Activated naive CD4-positive, alpha-beta T cell treated with anti-CD3 and anti-CD28 coated beads for 36 hours (primary cell): ENCODE measurements at regions of chr3 and their contacts with region 1.

Region 1: GRCh38 chr3:188154014-188154808 is at the start of gene LPP:
- DNase-seq: peak; percentile 88
- H3K4me3 Mint-ChIP-seq: peak within 1 kb of the TSS; percentile 83
- H3K27ac Mint-ChIP-seq: peak within 1 kb of the TSS; percentile 89
- H3K4me1 Mint-ChIP-seq: peaks cover 54% of the 10 kb centered on the region
- H3K27me3 Mint-ChIP-seq: no peaks in the 10 kb centered on the region
- total RNA-seq, gene LPP: 27.5 to 31.8 TPM

Region 2: GRCh38 chr3:188061133-188061532 is 93.1 kb before region 1 on chr3:
- CTCF ChIA-PET with region 1: no interaction called
- intact Hi-C with region 1: loop called (anchors 1 kb)
- DNase-seq: peak; percentile 74
- H3K4me3 Mint-ChIP-seq: no peak overlapping the region
- H3K27ac Mint-ChIP-seq: peak overlapping the region; percentile 68
- H3K4me1 Mint-ChIP-seq: peaks cover 32% of the 10 kb centered on the region
- H3K27me3 Mint-ChIP-seq: no peaks in the 10 kb centered on the region

Region 3: DNA sequence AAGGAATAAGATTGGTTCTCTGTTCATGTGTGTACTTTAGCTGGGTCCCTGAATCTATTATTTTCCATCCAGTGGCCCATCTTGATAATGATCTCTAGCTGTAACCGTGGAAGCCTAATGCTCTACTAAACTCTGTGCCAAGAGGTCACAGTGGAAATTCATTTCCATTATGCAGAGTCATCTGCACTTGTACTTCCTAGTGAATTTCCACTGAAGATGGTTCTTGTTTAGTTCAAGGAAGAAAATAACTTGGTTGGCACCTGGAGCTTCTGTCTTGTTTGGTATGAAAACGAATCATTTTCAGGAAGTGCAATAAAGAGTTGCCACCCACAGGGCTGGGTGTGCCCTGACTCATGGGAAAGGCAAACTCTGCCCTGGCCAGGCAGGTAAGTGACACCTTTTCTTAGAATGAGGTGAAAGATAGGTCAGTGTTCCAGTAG is 10.1 kb after region 1 on chr3:
- CTCF ChIA-PET with region 1: interaction called, 3 read pairs
- intact Hi-C with region 1: loop called (anchors 1 kb)
- DNase-seq: peak; percentile 60
- H3K4me3 Mint-ChIP-seq: no peak overlapping the region
- H3K27ac Mint-ChIP-seq: no peak overlapping the region
- H3K4me1 Mint-ChIP-seq: peaks cover 53% of the 10 kb centered on the region
- H3K27me3 Mint-ChIP-seq: no peaks in the 10 kb centered on the region